Posterior cingulate gyrus (tissue), 11 donors: ENCODE measurements at regions of chr2 and their contacts with region 1.

Region 1: DNA sequence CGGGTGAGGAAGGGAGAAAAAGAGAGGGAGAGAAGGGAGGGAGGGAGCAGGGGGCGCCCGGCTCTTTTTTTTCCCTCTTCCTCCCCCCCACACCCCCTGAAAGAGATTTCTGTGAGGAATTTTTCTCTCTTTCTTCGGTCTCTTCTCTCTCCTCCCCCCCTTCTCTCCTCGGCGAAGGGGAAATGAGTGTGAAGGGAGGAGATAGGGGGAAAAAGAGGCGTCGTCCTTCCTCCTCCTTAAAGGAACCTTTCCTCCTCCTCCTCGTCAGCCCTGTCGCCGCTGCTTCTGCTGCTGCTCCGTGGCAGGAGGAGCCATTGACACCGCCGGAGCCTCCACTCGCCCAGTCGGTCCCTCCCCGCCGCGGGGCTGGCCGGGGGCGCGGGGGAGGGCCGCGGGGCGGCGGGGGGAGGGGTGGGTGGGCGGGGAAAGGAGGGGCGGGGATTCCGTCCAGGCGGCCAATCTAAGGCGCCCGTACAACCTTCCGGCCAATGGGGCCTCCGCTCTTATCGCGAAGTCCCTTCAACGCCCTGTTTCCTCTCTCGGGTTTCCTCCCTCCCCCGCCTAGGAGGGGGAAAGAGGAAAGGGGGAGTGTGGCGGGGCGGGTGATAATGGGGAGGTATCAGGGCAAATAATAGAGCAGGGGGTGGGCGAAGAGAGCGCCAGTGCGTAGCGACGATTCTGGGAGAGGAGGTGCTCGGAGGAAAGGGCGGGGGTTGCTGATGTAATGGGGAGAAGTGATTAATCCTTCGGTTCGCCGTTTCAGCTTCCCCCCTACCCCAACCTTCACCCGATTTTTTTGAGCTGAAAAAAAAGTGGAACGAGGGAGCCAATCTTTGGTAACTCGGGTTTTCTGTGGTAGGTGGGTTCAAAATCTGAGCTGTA is at the start of gene FBXO11:
- DNase-seq: peak; percentile 91 to 99 (median 93)

Region 2: GRCh38 chr2:47402805-47403608 is 503.4 kb before region 1 on chr2 and contains the start of gene MSH2:
- intact Hi-C with region 1: loop called (anchors 10 kb)
- DNase-seq: peak; percentile 88 to 99 (median 94)

Region 3: GRCh38 chr2:47782671-47783485 is 123.5 kb before region 1 on chr2 and contains the start of gene MSH6:
- intact Hi-C with region 1: loop called (anchors 1 kb)
- DNase-seq: peak; percentile 81 to 99 (median 90)

Region 4: DNA sequence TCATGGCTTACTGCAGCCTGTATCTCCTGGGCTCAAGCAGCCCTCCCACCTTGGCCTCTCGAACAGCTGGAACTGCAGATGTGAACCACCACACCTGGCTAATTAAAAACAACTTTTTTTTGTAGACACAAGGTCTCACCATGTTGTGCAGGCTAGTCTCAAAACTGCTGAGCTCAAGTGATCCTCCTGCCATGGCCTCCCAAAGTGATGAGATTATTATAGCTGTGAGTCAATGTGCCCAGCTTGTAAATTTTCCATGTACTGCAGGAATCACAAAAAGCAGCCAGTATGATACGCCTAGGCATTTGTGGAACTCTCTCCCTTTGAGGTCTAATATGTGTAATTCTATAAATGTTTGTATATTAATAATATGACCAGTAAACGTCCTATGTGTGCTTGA is 63.6 kb before region 1 on chr2:
- intact Hi-C with region 1: no loop called
- DNase-seq: no peak

Region 5: GRCh38 chr2:47862949-47863348 is 43.4 kb before region 1 on chr2:
- intact Hi-C with region 1: loop called (anchors 5 kb)
- DNase-seq: no peak

Region 6: DNA sequence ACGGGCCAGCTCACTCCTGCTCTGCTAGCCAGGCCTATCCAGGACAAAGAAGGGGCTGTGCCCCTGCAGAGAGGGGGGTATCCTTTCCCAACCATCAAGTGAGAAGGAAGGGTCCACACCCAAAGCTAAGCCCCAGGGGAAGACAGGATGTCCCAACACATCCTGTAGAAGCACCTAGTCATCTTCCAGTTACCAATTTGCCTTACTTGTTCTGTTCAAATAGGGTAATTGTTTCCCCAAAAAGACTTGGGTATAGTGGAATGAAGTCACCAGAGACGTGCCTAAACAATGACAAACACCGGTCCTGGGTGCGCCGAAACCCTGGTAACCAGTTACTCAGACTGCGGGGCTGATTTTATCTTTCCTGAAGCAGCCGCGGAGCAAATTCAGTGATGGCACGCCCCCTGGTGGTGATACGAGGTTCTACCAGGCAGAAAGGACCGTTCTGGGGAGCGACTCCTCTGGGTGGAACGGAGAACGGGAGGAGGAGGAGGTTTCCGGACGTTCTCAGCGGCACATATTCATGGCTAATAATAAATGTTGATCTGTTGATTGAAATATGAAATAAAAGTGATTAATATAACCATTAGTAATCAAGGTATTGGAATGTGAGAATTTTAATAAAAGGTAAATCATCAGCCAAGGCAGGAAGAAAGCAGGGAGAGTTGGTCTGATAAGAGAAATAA is 514.3 kb after region 1 on chr2:
- intact Hi-C with region 1: loop called (anchors 5 kb)
- DNase-seq: peak; percentile 81 to 98 (median 94)